Left cardiac atrium (tissue), 4 donors: ENCODE measurements at regions of chr2 and their contacts with region 1.

Region 1: DNA sequence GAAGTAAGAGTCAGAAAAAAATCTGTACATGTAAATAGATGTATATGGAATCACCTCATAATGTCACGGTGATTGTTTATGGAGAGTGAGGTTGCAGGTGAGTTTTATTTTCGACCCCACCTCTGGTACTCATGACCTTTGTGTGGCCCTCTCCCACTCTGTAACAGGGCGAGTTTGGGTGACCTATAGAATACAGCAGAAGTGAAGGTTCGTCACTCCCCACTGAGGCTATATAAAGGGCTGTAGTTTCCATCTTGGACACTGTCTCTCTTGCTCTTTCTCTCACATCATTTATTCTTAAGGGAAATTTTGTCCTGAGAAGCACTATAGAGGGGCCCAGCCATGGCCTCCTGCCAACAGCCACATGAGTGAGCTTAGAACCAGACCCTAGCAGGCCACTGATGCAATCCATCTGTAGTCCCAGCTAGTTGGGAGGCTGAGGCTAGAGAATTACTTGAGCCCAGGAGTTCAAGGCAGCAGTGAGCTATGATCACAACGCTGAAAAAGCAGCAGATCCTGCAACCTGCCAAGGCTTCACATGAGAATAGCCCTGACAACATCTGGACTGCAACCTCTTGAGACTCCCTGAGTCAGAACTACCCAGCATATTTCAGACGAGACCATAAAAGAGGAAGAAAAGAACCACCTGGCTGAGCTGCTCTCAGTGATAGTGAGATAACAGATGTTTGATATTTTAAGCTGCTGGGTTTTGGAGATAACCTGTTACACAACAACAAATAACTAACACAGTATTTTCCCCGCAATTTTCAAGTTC is 74.3 kb upstream of the SLC1A4 start:
- DNase-seq: no peak
- ATAC-seq: no peak

Region 2: GRCh38 chr2:64787702-64788101 is 127.2 kb before region 1 on chr2:
- intact Hi-C with region 1: no loop called
- DNase-seq: no peak
- ATAC-seq: peak in 1 of 2 donors; percentile 22

Region 3: DNA sequence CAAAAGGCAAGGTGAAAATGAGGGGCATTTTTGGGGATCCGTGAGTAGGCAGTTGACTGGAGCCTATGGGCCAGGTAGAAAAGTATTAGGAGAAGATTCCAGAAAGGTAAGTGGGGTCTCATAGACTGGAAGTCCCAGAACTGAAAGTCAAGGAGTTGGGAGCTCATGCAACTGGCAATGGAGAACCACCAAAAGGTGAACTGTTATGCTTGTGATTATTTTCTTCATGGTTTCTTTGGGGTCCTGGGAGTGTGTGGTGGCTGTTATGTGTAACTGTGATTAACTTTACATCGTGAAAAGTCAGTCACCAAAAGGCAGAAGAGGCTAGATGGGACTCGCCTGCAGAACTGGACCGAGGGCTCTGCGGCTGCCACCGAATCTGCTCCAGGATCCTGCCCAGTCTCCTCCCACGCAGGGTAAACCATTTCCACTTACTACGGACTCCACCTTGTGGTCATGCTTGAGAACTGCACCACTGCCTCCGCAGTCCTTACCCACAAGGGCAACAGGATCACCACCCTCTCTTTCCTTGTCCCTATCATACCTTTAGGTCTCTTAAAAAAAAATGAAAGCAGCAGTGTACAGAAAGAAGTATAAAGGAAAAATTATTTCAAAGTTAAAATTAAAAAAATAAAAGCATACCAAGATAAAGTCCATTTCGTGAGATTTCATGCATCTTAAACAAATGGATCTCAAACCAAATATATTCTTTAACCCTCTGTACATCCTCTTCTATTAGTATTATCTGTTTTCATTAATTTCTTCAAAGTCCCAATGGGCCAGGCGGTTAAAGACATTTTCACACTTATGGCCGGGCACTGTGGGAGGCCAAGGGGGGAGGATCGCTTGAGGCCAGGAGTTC is 125.7 kb after region 1 on chr2:
- intact Hi-C with region 1: loop called (anchors 2 to 5 kb)
- DNase-seq: peak; percentile 86
- ATAC-seq: peak; percentile 95 to 97

Region 4: DNA sequence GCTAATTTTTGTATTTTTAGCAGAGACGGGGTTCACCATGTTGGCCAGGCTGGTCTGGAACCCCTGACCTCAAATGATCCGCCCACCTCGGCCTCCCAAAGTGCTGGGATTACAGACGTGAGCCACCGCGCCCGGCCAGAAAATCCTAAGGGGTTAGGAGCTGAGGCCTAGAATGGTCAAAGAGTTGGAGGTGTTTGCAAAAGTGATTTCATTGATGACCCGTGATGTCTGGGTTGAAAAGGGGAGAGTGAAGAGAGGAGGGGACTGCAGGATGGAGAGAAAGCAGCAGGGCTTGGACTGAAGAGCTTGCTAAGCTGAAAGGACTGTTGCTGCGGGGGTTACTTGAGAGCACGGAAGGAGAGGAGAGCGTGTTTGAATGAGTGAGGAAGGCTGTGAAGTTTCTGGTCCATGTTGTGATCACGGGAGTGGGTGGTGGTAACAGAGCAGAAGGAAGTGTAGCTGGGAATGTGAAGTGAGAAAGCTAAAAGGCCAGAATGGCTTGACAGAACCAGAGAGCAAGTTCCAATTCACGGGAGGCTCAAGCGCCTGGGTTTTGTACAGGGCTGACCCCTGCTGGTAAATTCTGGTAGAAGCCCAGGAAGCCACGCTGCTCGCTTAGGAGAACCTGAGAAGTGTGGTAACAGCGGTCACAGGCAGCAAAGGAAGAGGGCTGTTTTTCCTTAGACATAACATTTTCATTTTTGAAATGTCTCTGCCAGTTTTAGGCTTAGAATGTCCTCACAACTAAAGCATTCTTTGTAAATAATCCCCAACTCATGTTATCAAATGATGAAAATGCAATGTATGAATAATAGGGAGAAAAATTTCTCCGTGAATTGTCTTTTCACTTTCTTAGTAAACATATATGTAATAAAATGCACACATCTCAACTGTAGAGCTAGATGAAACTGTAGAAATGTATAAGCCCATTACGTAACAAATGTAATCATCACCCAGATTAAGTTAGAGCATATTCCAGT is 272.2 kb after region 1 on chr2:
- intact Hi-C with region 1: loop called (anchors 2 to 10 kb)
- DNase-seq: peak; percentile 74
- ATAC-seq: peak; percentile 97

Region 5: GRCh38 chr2:65574993-65575392 is 660.1 kb after region 1 on chr2:
- intact Hi-C with region 1: loop called in 1 of 2 experiments (anchors 5 kb)
- DNase-seq: no peak
- ATAC-seq: peak in 1 of 2 donors; percentile 24